Cardiac septum (tissue), 1 donor: ENCODE measurements at regions of chr11 and their contacts with region 1.

Region 1: GRCh38 chr11:61477727-61478148 is 30.8 kb upstream of the LRRC10B start:
- DNase-seq: no peak

Region 2: DNA sequence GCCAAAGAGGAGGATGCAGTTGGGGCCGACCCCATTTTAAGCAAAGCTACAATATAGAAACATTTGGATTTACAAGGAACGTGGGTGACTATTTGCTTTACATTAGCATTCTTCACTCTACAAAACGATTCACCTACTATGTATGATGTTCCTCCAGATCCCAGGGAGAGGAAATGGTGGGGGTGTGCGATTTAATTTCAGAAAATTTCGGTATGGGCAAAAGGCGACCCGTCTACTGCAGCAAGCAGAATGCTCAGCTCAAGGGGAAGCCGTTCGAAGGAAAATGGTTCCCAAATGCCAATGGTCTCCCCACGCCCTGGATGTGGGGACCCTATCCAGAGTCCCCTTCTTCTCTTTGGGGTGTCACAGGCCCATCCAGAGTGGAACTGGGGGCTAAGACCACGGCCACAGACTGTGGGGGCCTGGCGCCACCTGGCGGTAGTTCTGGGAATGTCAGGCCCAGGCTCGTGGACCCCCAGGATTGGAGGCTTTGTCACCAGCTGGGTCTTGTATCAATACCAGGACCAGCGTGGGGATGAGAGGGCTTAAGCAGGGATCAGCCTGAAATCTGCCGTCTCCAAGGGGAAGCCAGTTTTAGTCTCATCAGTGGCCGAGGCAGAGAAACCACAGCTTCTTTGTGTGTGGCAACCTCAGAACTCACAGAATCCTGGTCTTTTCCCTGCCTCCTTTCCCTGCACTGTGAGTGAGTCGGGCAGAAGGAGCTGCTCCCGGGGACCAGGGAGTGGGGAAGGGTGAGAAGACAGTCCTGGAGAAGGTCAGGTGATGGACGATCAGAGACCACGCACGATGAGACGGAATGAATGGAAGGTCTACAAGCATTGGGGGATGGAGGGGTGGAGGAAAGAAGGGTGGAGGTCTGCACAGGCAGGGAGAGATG is 39.2 kb after region 1 on chr11:
- intact Hi-C with region 1: loop called (anchors 2 kb)
- DNase-seq: no peak

Region 3: DNA sequence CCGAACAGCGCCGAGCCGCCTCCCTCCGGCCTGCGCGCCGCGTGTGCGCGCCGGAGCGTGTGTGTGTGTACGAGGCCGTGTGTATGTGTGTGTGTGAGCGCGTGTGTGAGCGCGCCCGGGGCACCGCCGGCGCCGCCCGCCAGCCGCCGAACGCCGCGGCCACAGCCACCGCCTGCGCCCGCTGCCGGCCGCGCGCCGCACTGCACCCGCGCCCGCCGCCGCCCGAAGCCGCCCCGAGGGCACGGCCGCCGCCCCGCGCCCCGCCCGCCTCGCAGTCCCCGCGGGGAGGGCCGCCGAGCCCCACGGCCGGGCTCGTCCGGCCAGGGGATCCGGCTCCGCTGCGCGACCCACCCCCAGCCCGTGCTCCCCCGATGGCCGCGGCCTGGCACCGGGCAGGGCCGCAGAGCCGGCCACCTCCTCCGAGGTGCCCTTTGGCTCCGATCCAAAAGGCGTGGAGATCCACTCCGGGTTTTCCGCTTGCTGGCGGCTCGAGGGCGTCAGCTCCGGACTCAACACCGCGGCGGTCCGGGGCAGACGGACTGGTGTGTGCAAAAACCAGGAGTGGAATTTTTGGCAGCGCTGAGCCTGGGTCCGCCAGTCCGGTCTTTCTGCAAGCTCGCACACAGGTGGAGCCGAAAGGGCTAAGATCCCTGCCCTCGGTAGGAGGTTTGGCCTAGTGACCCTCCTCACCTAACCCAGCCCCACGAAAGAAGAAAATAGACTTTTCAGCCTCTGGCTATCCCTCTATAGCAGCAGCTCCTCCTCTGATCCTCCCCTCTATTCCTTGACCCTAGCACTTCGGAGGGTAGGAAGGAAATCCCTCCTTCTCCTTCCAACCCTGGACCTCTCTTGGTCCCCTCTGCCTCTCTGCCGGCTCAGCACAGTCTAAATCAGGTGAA is 103.5 kb after region 1 on chr11 and contains the start of gene SYT7:
- intact Hi-C with region 1: loop called (anchors 5 kb)
- DNase-seq: peak; percentile 96
- total RNA-seq, gene SYT7: 9.3 TPM

Region 4: GRCh38 chr11:61627567-61628445 is 150.1 kb after region 1 on chr11:
- intact Hi-C with region 1: loop called (anchors 2 kb)
- DNase-seq: peak; percentile 83

Region 5: DNA sequence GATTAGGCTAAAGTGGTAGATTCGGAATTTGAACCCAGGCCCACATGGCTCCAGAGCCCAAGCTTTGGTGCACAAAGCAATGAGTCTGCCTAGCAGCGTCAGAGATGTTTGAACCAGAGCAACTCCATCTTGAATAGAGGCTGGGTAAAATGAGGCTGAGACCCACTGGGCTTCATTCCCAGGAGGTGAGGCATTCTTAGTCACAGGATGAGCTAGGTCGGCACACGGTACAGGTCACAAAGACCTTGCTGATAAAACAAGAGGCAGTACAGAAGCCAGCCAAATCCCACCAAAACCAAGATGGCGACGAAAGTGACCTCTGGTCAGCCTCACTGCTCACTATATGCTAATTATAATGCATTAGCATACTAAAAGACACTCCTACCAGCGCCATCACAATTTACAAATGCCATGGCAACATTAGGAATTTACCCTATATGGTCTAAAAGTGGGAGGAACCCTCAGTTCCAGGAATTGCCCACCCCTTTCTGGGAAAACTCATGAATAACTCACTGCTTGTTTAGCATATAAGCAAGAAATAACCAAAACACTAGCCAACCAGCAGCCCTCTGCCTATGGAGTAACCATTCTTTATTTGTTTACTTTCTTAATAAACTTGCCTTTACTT is 162.2 kb after region 1 on chr11:
- intact Hi-C with region 1: loop called (anchors 2 kb)
- DNase-seq: no peak

Region 6: GRCh38 chr11:61733120-61733978 is 255.6 kb after region 1 on chr11:
- intact Hi-C with region 1: loop called (anchors 10 kb)
- DNase-seq: peak; percentile 92